Naive thymus-derived CD4-positive, alpha-beta T cell (primary cell): ENCODE measurements at regions of chrX and their contacts with region 1.

Region 1: GRCh38 chrX:45806410-45807121 is 605.9 kb upstream of the DIPK2B start:
- DNase-seq: peak in 7 of 9 donors; percentile 59 to 81 (median 77)
- ATAC-seq: peak; percentile 90
- H3K4me3 ChIP-seq: peak overlapping the region; percentile 58
- H3K4me3 Mint-ChIP-seq: peak overlapping the region; percentile 69 to 90 (median 84)
- H3K27ac ChIP-seq: peak overlapping the region; percentile 79
- H3K27ac Mint-ChIP-seq: peak overlapping the region; percentile 93 to 98 (median 97)
- H3K4me1 ChIP-seq: peaks cover 16 to 20% of the 10 kb centered on the region in 2 donors
- H3K4me1 Mint-ChIP-seq: peaks cover 10 to 79% (median 39%) of the 10 kb centered on the region in 7 donors
- H3K27me3 ChIP-seq: no peaks in the 10 kb centered on the region
- H3K27me3 Mint-ChIP-seq: no peaks in the 10 kb centered on the region

Region 2: DNA sequence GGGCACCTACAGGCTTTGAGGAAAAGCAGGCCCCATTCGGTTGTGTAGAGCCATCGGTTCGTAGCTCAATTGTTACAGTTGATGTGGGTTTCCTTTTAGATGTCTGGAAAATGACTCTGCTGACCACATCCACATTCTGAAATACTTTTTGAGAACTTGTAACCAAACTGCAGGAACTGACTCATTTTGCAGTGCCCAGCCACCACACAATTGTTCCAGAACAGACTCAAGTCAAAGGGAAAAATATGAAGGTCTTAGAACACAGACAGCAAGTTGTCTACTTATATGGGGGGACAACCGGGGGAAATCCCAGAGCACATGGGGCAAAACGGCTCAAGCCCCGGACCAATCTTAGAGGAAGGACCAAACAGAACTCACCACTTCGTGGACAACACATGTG is 48.2 kb before region 1 on chrX:
- CTCF ChIA-PET with region 1: no interaction called
- POLR2A ChIA-PET with region 1: interaction called, 7 read pairs
- intact Hi-C with region 1: loop called in 1 of 2 experiments (anchors 2 kb)
- DNase-seq: peak in 2 of 9 donors; percentile 9 to 40
- ATAC-seq: peak; percentile 47
- H3K4me3 ChIP-seq: peak overlapping the region; percentile 29
- H3K4me3 Mint-ChIP-seq: peak overlapping the region in 9 of 10 donors; percentile 62 to 84 (median 70)
- H3K27ac ChIP-seq: peak overlapping the region; percentile 31
- H3K27ac Mint-ChIP-seq: peak overlapping the region in 8 of 9 donors; percentile 49 to 93 (median 72)
- H3K4me1 ChIP-seq: peaks cover 31 to 67% of the 10 kb centered on the region in 2 donors
- H3K4me1 Mint-ChIP-seq: peaks cover 28 to 67% (median 45%) of the 10 kb centered on the region in 7 donors
- H3K27me3 ChIP-seq: no peaks in the 10 kb centered on the region
- H3K27me3 Mint-ChIP-seq: no peaks in the 10 kb centered on the region

Region 3: GRCh38 chrX:45769761-45770582 is 36.6 kb before region 1 on chrX:
- CTCF ChIA-PET with region 1: interaction called, 9 read pairs
- POLR2A ChIA-PET with region 1: interaction called, 42 read pairs
- intact Hi-C with region 1: loop called (anchors 1 kb)
- DNase-seq: peak in 3 of 9 donors; percentile 13 to 64 (median 21)
- ATAC-seq: peak; percentile 79
- H3K4me3 ChIP-seq: peak overlapping the region; percentile 71
- H3K4me3 Mint-ChIP-seq: peak overlapping the region; percentile 76 to 95 (median 90)
- H3K27ac ChIP-seq: peak overlapping the region; percentile 76
- H3K27ac Mint-ChIP-seq: peak overlapping the region; percentile 90 to 97 (median 94)
- H3K4me1 ChIP-seq: peaks cover 11 to 45% of the 10 kb centered on the region in 2 donors
- H3K4me1 Mint-ChIP-seq: peaks cover 16 to 68% (median 55%) of the 10 kb centered on the region in 7 donors
- H3K27me3 ChIP-seq: no peaks in the 10 kb centered on the region
- H3K27me3 Mint-ChIP-seq: no peaks in the 10 kb centered on the region

Region 4: DNA sequence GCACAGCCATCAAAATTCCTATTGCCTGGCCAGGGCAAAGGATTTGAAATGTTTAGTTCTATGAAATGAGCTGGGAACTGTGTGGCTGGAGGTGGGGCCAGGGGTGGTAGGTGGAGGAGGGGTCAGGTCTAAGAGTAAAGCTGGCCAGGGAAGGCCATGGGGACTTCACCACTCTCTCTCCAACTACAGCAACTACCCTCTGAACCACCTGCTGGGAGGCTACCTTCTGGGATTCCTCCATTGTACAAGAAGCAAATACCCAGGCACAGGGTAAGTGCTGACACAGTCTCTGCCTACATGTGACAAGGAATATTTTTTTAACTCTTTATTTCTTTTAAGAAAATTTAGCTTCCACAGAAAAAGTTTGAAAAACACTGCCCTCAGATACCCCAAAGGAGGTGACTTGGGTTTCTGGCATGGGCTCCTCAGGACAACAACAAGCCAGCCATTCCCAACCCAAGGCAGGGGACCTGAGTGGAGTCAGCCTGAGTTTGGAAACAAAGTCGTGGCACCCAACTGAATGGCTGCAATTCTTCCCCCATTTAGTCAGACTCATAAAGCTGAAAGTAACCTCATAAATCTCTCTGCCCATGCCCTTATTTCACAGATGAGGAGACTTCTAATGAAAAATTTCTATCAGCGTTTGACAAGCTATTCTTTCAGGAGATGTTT is 12.1 kb before region 1 on chrX:
- CTCF ChIA-PET with region 1: interaction called, 7 read pairs
- POLR2A ChIA-PET with region 1: interaction called, 12 read pairs
- intact Hi-C with region 1: no loop called
- DNase-seq: no peak
- ATAC-seq: no peak
- H3K4me3 ChIP-seq: no peak overlapping the region
- H3K4me3 Mint-ChIP-seq: no peak overlapping the region
- H3K27ac ChIP-seq: no peak overlapping the region
- H3K27ac Mint-ChIP-seq: no peak overlapping the region
- H3K4me1 ChIP-seq: no peaks in the 10 kb centered on the region
- H3K4me1 Mint-ChIP-seq: peaks cover 4 to 67% (median 10%) of the 10 kb centered on the region in 7 donors
- H3K27me3 ChIP-seq: no peaks in the 10 kb centered on the region
- H3K27me3 Mint-ChIP-seq: no peaks in the 10 kb centered on the region

Region 5: DNA sequence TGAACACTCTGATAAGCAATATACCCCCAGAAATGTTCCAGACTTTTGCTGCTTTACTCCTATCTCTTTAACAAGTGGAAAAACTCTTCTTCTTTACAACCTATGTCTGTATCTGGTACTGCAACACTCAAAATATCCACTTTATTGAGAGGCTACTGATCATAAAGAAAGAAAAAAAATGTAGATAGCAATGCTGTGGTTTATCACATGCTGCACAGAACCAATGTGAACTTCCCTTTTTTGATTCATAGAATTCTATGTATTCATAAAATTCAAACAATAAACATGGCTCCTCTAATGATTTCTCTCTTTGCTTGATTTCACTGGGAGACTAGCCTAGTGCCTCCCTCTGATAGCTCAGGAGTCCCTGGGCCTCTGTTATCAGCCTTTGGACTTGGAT is 515.1 kb after region 1 on chrX:
- CTCF ChIA-PET with region 1: interaction called, 3 read pairs
- POLR2A ChIA-PET with region 1: interaction called, 3 read pairs
- intact Hi-C with region 1: loop called in 1 of 2 experiments (anchors 5 kb)
- DNase-seq: no peak
- ATAC-seq: no peak
- H3K4me3 ChIP-seq: no peak overlapping the region
- H3K4me3 Mint-ChIP-seq: no peak overlapping the region
- H3K27ac ChIP-seq: no peak overlapping the region
- H3K27ac Mint-ChIP-seq: peak overlapping the region in 4 of 9 donors; percentile 12 to 77 (median 40)
- H3K4me1 ChIP-seq: peaks cover 7 to 22% of the 10 kb centered on the region in 2 donors
- H3K4me1 Mint-ChIP-seq: peaks cover 14 to 65% (median 41%) of the 10 kb centered on the region in 7 donors
- H3K27me3 ChIP-seq: no peaks in the 10 kb centered on the region
- H3K27me3 Mint-ChIP-seq: no peaks in the 10 kb centered on the region